Right lobe of liver (tissue), 6 donors: ENCODE measurements at regions of chr20 and their contacts with region 1.

Region 1: GRCh38 chr20:22575087-22575721 is 9.2 kb downstream of the FOXA2 start:
- DNase-seq: no peak
- ATAC-seq: peak in 2 of 4 donors; percentile 1
- H3K4me3 ChIP-seq: peak overlapping the region in 2 of 3 donors; percentile 84 to 89
- H3K27ac ChIP-seq: peak overlapping the region; percentile 16 to 98 (median 28)
- H3K4me1 ChIP-seq: peaks cover 0 to 57% (median 16%) of the 10 kb centered on the region in 4 donors
- H3K27me3 ChIP-seq: no peaks in the 10 kb centered on the region
- CTCF ChIP-seq: no peak
- POLR2A ChIP-seq: no peak

Region 2: DNA sequence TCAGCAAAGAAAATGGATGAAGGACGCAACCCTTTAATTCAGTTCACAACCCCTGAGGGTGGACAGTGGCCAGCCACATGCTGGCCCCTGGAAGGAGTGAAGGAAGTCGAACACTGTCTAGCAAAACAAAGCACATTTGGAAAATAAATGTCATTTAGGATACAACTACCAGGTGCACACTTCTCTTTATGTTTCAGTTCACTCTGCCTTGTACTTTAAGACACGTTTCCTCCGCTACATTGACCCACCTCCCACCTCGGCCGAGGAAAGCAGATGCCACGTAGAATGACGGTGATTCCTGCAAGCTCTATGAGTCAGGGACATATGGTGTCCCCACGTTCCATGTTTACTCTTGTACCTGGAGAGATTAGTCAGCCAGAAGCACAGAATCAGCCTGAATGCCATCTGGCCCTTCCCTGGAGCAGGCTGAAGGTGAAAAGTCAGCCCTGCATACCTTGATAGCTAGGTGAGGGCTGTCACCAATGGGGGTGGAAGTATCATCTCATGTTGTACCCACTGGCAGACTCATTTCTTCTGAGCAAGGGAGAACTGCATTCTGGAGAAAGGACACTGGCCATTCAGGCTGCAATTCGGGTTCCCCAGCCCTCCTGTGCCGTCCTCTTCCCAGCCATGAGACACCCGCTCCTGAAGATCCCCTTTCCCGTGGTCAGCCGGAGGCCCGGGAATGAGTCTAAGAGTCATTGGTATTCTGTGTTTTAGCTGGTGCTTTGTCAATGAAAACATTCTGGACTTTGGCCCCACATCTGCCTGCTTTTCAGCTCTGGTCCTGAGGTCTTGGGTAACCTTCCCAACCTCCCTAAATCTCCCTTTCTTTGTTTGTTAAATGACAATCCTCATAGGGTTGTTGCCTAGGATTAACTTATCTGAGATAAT is 51.5 kb before region 1 on chr20:
- intact Hi-C with region 1: loop called in 1 of 2 experiments (anchors 10 kb)
- DNase-seq: peak; percentile 53 to 82 (median 71)
- ATAC-seq: peak; percentile 70 to 79 (median 72)
- H3K4me3 ChIP-seq: peak overlapping the region; percentile 24 to 60 (median 48)
- H3K27ac ChIP-seq: peak overlapping the region; percentile 71 to 97 (median 87)
- H3K4me1 ChIP-seq: peaks cover 0 to 48% (median 20%) of the 10 kb centered on the region in 4 donors
- H3K27me3 ChIP-seq: no peaks in the 10 kb centered on the region
- CTCF ChIP-seq: no peak
- POLR2A ChIP-seq: peak; percentile 56